HEK293 (cell line): ENCODE measurements at regions of chr19 and their contacts with region 1.

Region 1: GRCh38 chr19:35509861-35510625 is 3.4 kb downstream of the DMKN start:
- H3K4me3 ChIP-seq: peak overlapping the region; percentile 48
- H3K27ac ChIP-seq: peak overlapping the region; percentile 99
- H3K4me1 ChIP-seq: peaks cover 15% of the 10 kb centered on the region
- CTCF ChIP-seq: peak; percentile 100

Region 2: DNA sequence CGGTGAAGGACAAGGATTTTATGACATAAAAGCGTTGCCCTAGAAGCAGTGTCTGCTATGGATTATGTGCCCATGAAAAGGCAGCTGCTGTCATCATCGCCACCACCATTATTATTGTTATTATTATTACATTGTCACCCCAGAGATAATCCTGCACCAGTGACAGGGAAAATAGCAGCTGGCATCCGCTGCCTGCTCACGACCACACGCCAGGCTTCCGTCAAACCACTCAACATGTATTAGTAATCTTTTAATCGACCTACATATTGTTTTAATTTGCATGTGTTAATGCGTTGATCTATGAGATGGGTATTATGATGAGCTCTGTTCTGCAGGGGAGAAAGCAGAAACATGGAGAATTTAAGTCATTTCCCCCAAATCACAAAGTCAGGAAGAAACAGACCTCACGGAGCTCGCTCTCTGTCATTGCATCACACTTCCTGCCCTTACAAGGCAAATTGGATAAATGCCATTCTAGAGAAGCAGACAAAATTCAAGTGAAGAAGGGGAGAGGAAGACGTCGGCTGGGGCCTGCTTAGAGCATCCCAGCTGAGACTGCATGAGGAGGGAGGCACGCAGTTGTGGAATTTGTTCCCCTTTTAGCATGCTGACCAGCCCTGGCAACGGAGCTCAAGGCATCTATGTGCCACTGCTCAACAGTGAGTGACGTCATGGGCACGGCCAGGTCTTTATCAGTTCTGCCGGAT is 152.0 kb before region 1 on chr19 and contains the start of gene FFAR3:
- CTCF ChIA-PET with region 1: interaction called, 53 read pairs
- POLR2A ChIA-PET with region 1: interaction called, 5 read pairs
- H3K4me3 ChIP-seq: no peak within 1 kb of the TSS
- H3K27ac ChIP-seq: no peak within 1 kb of the TSS
- H3K4me1 ChIP-seq: no peaks in the 10 kb centered on the region
- CTCF ChIP-seq: no peak

Region 3: DNA sequence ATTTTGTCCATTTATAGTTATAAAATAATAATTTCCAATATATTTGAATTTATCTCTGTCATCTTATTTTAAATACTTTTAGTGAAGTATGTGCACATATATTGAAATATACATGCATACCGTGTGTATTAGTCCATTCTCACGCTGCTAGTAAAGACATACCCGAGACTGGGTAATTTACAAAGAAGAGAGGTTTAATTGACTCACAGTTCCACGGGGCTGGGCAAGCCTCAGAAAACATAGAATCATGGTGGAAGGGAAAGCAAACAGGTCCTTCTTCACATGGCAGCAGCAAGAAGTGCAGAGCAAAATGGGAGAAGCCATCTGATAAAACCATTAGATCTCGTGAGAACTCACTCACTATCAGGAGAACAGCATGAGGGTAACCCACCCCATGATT is 99.6 kb before region 1 on chr19:
- CTCF ChIA-PET with region 1: no interaction called
- POLR2A ChIA-PET with region 1: no interaction called
- H3K4me3 ChIP-seq: no peak overlapping the region
- H3K27ac ChIP-seq: no peak overlapping the region
- H3K4me1 ChIP-seq: 0 out of 2 replicates have a peak, but pooled peaks cover 3% of the 10 kb centered on the region
- CTCF ChIP-seq: no peak

Region 4: DNA sequence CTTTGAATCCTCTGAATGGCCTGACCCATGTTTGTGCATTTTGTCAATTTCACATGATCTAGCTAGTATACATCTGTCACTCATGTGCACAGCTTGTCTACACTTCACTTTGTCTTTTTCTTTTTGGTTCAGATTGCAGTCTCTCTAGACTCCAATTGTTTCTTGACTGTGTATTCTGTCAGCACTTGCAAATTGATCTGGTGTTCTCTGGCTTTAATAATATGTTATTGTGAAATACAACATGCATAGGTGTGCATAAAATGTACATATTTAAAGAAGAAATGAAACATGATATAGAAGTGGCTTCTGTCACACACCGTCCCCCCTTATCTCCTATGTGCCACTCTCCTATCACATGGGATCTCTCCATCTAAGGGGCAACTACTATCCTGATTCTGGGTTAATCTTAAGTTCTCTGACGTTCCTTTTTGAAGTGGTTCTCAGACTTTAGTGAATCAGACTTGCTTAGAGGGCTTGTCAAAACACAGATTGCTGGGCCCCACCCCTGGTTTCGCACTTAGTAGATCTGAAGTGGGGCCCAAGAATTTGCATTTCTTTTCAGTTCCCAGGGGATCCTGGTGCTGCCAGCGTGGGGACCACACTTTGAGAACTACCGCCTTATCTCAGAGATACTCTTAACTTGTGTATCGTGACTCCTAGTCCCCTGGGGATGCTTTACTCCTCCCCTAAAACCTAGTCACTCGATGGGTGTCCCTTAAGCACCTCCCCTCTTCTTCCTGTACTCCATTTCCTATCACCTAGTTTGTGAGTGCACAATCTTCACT is 25.6 kb before region 1 on chr19:
- CTCF ChIA-PET with region 1: interaction called, 30 read pairs
- POLR2A ChIA-PET with region 1: no interaction called
- H3K4me3 ChIP-seq: no peak overlapping the region
- H3K27ac ChIP-seq: no peak overlapping the region
- H3K4me1 ChIP-seq: peaks cover 8% of the 10 kb centered on the region
- CTCF ChIP-seq: no peak

Region 5: DNA sequence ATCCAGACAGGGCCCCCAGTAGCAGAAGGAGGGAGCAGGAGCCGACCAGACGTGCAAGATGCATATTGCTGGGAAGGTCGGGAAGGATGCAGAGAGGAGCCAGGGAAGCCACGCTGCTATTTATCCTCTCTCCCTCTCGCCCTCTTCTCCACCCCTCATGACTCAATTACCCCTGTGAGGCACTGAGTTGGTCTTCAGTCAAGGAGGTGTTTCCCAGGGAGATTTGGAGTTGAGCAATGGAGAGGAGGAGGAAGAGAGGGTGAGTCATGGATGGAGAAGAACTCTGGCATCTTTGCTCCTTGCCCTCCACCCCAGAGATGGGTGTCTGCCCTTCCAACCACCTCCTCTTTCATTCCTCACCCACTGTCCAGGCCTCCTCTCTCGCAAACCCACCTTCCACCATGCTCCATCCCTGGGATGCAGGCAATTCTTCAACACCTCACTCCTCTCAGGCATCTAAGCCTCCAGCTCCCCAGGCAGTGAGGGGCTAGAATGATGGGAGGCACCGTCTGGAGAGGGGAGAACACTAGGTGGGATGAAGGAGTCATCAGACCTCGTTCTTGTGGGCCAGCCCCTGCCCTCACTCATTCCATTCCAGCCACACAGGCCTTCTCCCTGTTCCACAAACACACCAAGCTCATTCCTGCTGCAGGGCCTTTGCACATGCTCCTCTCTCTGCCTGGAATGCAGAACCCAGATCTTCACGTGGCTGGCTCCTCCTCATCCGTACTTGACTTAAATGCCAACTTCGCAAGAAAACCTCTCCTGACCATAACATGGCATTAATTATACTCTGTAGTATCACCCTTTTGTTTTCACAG is 18.4 kb after region 1 on chr19 and contains the start of gene SBSN:
- CTCF ChIA-PET with region 1: interaction called, 86 read pairs
- POLR2A ChIA-PET with region 1: interaction called, 18 read pairs
- H3K4me3 ChIP-seq: no peak within 1 kb of the TSS
- H3K27ac ChIP-seq: no peak within 1 kb of the TSS
- H3K4me1 ChIP-seq: no peaks in the 10 kb centered on the region
- CTCF ChIP-seq: no peak

Region 6: GRCh38 chr19:35545001-35545911 is 35.2 kb after region 1 on chr19 and contains the start of gene TMEM147:
- CTCF ChIA-PET with region 1: interaction called, 48 read pairs
- POLR2A ChIA-PET with region 1: interaction called, 14 read pairs
- H3K4me3 ChIP-seq: peak within 1 kb of the TSS; percentile 62
- H3K27ac ChIP-seq: peak within 1 kb of the TSS; percentile 94
- H3K4me1 ChIP-seq: peaks cover 16% of the 10 kb centered on the region
- CTCF ChIP-seq: no peak; the same call in none of the 2 replicates

Region 7: DNA sequence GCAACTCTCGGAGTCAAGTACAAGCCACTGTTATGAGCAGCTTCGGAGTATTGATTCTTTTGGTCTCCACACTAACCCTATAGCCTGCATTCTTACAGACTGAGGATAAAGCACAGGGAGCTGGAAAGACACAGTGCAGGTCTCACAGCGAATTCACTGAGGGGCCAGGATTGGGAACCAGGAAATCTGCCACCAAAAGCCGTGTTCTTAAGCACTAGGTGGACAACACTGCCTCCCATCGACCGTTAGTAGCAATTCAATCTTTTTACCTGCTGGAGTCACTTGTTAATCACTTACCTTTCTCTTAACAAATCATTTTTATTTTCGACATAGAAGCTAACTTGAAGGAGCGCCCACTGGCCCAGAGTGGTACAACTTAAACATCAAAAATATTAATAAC is 82.2 kb after region 1 on chr19:
- CTCF ChIA-PET with region 1: interaction called, 19 read pairs
- POLR2A ChIA-PET with region 1: no interaction called
- H3K4me3 ChIP-seq: no peak overlapping the region
- H3K27ac ChIP-seq: no peak overlapping the region
- H3K4me1 ChIP-seq: 0 out of 2 replicates have a peak, but pooled peaks cover 2% of the 10 kb centered on the region
- CTCF ChIP-seq: 0 out of 2 replicates have a peak, but pooled peaks have one; percentile 34

Region 8: GRCh38 chr19:35716801-35717666 is 207.0 kb after region 1 on chr19:
- CTCF ChIA-PET with region 1: interaction called, 17 read pairs
- POLR2A ChIA-PET with region 1: no interaction called
- H3K4me3 ChIP-seq: peak overlapping the region; percentile 44
- H3K27ac ChIP-seq: peak overlapping the region; percentile 93
- H3K4me1 ChIP-seq: peaks cover 23% of the 10 kb centered on the region
- CTCF ChIP-seq: peak; percentile 100